Activated naive CD4-positive, alpha-beta T cell treated with anti-CD3 and anti-CD28 coated beads for 36 hours (primary cell): ENCODE measurements at regions of chr9 and their contacts with region 1.

Region 1: GRCh38 chr9:2181792-2182191 is 166.6 kb downstream of the SMARCA2 start:
- DNase-seq: peak; percentile 37
- H3K4me3 Mint-ChIP-seq: no peak overlapping the region
- H3K27ac Mint-ChIP-seq: no peak overlapping the region
- H3K4me1 Mint-ChIP-seq: peaks cover 6% of the 10 kb centered on the region
- H3K27me3 Mint-ChIP-seq: no peaks in the 10 kb centered on the region

Region 2: DNA sequence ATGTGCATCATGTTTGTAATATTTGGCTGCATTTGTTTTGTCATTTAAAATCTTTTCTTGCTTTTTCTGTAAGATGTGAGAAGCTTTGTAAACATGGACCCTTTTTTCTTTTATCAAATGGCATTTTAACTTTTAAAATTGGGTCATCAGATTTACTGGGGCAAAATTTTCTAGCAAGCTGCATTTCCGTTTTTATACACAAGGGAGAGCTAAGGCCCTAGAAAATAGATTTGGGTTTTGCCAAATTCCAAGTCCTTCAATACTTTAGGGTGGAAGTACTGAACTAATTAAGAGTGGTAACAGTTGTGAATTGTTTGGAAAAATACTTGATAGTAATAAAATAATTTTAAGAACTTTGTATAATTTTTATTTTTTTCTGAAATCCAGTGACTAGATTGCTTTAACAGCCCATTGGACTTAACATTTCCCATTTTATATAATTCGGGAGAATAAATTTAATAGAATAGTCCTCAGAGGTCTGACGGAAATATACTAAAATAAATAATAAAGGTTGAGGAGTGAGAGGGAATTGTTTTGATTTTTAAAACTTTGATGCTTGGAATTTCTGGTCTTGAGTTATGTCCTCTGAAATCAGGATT is 49.2 kb before region 1 on chr9:
- CTCF ChIA-PET with region 1: interaction called, 30 read pairs
- intact Hi-C with region 1: loop called (anchors 1 kb)
- DNase-seq: no peak
- H3K4me3 Mint-ChIP-seq: no peak overlapping the region
- H3K27ac Mint-ChIP-seq: no peak overlapping the region
- H3K4me1 Mint-ChIP-seq: peaks cover 10% of the 10 kb centered on the region
- H3K27me3 Mint-ChIP-seq: no peaks in the 10 kb centered on the region

Region 3: GRCh38 chr9:2145746-2146145 is 36.0 kb before region 1 on chr9:
- CTCF ChIA-PET with region 1: interaction called, 9 read pairs
- intact Hi-C with region 1: loop called (anchors 2 kb)
- DNase-seq: no peak
- H3K4me3 Mint-ChIP-seq: no peak overlapping the region
- H3K27ac Mint-ChIP-seq: no peak overlapping the region
- H3K4me1 Mint-ChIP-seq: peaks cover 34% of the 10 kb centered on the region
- H3K27me3 Mint-ChIP-seq: no peaks in the 10 kb centered on the region

Region 4: DNA sequence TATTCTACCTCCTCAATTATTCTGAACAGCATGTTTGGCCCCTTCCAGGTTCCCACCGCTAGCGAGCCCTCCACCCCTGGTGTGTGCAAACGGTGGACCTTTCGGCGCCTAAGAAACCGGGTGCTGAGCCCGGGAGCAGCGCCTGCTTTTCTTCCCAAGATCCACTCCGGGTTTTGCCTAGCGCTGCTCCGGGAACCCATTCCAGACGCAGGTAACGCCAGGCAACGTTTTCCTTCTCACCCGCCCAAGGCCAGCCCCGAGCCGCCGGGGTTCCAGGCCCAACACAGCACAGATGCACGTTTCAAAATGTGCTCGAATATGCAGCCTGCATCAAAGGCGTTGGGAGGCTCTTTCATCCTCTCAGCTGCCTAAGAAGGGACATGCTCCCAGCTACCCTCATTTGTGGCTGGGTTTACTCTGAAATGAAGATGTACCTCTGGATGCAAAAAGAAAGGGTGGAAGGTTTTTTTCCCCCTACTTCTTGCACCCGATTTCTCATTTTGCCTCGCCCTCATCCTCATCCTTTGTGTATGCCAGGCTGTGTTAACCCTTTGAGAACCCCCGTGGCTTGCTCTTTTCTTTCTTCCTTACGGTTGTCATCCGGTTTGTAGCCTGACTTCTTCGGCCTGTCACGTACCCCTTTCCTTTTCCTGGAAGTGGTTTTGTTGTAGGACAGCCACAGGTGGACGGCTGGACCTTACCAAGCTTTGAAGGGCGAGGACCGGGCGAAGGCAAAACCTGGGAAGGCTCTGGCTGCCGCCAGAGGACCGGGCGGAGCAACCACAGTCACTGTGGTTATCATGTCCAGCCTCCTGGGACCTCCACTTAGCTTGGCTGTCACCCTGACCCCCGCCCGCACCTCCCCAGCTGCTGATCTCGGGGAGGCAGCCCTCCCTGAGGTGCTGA is 60.3 kb after region 1 on chr9:
- CTCF ChIA-PET with region 1: no interaction called
- intact Hi-C with region 1: no loop called
- DNase-seq: peak; percentile 76
- H3K4me3 Mint-ChIP-seq: peak overlapping the region; percentile 73
- H3K27ac Mint-ChIP-seq: no peak overlapping the region
- H3K4me1 Mint-ChIP-seq: peaks cover 10% of the 10 kb centered on the region
- H3K27me3 Mint-ChIP-seq: peaks cover 17% of the 10 kb centered on the region

Region 5: GRCh38 chr9:2469681-2470221 is 288.0 kb after region 1 on chr9:
- CTCF ChIA-PET with region 1: no interaction called
- intact Hi-C with region 1: no loop called
- DNase-seq: peak; percentile 44
- H3K4me3 Mint-ChIP-seq: no peak overlapping the region
- H3K27ac Mint-ChIP-seq: no peak overlapping the region
- H3K4me1 Mint-ChIP-seq: peaks cover 2% of the 10 kb centered on the region
- H3K27me3 Mint-ChIP-seq: peaks cover 14% of the 10 kb centered on the region